CD8-positive, alpha-beta T cell (primary cell): ENCODE measurements at regions of chr9 and their contacts with region 1.

Region 1: DNA sequence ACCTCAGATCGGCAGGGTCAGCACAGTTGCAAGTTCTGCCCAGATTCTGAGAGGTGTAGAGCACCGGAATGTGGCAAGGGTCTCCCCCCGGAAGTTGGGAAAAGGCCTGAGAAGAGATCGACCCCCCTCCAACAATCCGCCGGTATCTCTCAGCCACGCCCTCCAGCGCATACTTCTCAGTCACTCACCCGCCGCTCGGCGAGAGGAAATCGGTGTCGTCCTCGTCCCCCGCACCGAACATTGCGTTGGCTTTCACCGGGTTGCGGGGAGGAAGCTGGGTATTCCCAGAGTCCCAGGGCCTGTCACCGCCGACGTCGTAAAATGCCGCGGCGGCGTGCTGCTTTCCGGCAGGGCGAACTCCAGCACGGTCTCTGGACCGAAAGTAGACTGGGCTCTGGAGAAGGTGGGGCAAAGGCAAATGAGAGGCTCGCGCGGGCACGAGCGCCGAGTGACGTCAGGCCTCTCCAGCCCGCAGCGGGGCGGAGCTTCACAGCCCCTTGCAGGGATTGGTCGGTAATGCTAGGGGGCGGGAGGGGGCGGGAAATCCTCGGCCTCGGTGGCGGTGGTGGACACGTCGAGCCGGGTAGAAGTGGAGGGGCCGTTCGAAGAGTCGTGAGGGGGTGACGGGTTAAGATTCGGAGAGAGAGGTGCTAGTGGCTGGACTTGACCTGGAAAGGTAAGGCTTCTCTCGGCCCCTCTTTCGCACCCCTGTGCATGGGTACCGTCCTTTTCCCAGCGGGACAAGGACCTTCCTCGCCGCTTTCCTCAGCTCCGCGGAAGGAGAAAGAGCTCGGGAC is at the starts of genes FKBP15 and SLC31A1:
- DNase-seq: peak; percentile 91 to 99 (median 95)
- ATAC-seq: peak; percentile 99
- H3K4me3 ChIP-seq: peak within 1 kb of the TSS; percentile 84 to 94
- H3K4me3 Mint-ChIP-seq: peak within 1 kb of the TSS; percentile 95
- H3K27ac ChIP-seq: peak within 1 kb of the TSS; percentile 71 to 90
- H3K27ac Mint-ChIP-seq: peak within 1 kb of the TSS; percentile 94
- H3K4me1 ChIP-seq: peaks cover 22% of the 10 kb centered on the region
- H3K4me1 Mint-ChIP-seq: peaks cover 57% of the 10 kb centered on the region
- H3K27me3 ChIP-seq: no peaks in the 10 kb centered on the region
- H3K27me3 Mint-ChIP-seq: no peaks in the 10 kb centered on the region
- CTCF ChIP-seq: no peak
- total RNA-seq, gene FKBP15: 8.7 to 8.9 TPM
- total RNA-seq, gene SLC31A1: 8.7 to 9.6 TPM

Region 2: DNA sequence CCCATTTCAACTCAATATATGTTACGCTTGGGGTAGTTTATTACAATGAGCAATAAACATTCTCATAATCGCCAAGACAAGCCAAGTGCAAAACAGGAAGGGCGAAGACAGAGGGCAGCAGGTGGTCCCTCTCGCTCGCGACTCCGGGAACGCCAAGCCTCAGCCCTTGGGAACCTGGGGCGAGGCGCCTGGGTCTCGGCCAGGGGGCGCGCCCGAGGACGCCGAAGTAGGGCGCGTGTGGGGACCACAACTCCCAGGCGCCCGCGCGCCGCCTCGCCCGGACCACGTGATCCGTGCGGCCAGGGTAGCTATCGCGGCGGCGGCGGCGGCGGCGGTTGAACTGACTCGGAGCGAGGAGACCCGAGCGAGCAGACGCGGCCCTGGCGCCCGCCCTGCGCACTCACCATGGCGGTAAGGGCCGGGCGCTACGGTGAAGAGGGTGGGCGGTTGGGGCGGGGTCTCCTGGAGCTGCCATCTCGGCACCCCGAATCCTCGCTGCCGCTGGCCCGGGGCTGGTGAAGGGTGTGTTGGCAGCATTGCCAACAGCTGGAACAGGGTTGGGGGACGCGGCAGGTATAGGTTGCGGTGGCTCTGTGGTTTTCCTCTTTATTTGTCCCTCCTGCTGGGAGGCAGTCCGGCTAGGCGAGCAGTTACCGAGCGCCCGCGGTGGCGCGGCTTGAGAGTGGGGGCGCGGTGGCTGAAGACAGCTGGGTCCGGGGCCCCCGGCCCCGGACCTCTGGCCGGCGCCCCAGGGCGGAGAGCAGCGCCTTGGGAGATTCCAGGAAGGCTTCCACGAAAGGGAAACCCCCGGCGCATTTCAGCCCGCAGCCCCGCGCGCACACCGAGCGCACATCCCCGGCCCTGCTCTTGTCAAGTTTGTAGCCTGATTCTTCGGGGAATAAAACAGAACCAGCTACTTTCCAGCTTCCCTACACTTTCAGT is 70.3 kb before region 1 on chr9 and contains the start of gene SLC31A2:
- CTCF ChIA-PET with region 1: no interaction called
- POLR2A ChIA-PET with region 1: interaction called, 4 read pairs
- intact Hi-C with region 1: loop called (anchors 1 kb)
- DNase-seq: peak; percentile 61 to 91 (median 85)
- ATAC-seq: peak; percentile 94
- H3K4me3 ChIP-seq: peak within 1 kb of the TSS; percentile 83 to 88
- H3K4me3 Mint-ChIP-seq: peak within 1 kb of the TSS; percentile 83
- H3K27ac ChIP-seq: peak within 1 kb of the TSS; percentile 38 to 52
- H3K27ac Mint-ChIP-seq: peak within 1 kb of the TSS; percentile 41
- H3K4me1 ChIP-seq: peaks cover 20% of the 10 kb centered on the region
- H3K4me1 Mint-ChIP-seq: peaks cover 35% of the 10 kb centered on the region
- H3K27me3 ChIP-seq: no peaks in the 10 kb centered on the region
- H3K27me3 Mint-ChIP-seq: no peaks in the 10 kb centered on the region
- CTCF ChIP-seq: peak; percentile 33
- total RNA-seq, gene SLC31A2: 5.4 to 6.0 TPM

Region 3: GRCh38 chr9:113196967-113197366 is 24.2 kb before region 1 on chr9:
- CTCF ChIA-PET with region 1: no interaction called
- POLR2A ChIA-PET with region 1: interaction called, 3 read pairs
- intact Hi-C with region 1: loop called in 1 of 2 experiments (anchors 2 kb)
- DNase-seq: no peak
- ATAC-seq: no peak
- H3K4me3 ChIP-seq: no peak overlapping the region
- H3K4me3 Mint-ChIP-seq: no peak overlapping the region
- H3K27ac ChIP-seq: no peak overlapping the region
- H3K27ac Mint-ChIP-seq: no peak overlapping the region
- H3K4me1 ChIP-seq: no peaks in the 10 kb centered on the region
- H3K4me1 Mint-ChIP-seq: no peaks in the 10 kb centered on the region
- H3K27me3 ChIP-seq: no peaks in the 10 kb centered on the region
- H3K27me3 Mint-ChIP-seq: no peaks in the 10 kb centered on the region
- CTCF ChIP-seq: no peak

Region 4: GRCh38 chr9:113247640-113248039 is 26.4 kb after region 1 on chr9:
- CTCF ChIA-PET with region 1: no interaction called
- POLR2A ChIA-PET with region 1: no interaction called
- intact Hi-C with region 1: no loop called
- DNase-seq: no peak
- ATAC-seq: no peak
- H3K4me3 ChIP-seq: no peak overlapping the region
- H3K4me3 Mint-ChIP-seq: no peak overlapping the region
- H3K27ac ChIP-seq: no peak overlapping the region
- H3K27ac Mint-ChIP-seq: no peak overlapping the region
- H3K4me1 ChIP-seq: no peaks in the 10 kb centered on the region
- H3K4me1 Mint-ChIP-seq: no peaks in the 10 kb centered on the region
- H3K27me3 ChIP-seq: no peaks in the 10 kb centered on the region
- H3K27me3 Mint-ChIP-seq: no peaks in the 10 kb centered on the region
- CTCF ChIP-seq: no peak

Region 5: DNA sequence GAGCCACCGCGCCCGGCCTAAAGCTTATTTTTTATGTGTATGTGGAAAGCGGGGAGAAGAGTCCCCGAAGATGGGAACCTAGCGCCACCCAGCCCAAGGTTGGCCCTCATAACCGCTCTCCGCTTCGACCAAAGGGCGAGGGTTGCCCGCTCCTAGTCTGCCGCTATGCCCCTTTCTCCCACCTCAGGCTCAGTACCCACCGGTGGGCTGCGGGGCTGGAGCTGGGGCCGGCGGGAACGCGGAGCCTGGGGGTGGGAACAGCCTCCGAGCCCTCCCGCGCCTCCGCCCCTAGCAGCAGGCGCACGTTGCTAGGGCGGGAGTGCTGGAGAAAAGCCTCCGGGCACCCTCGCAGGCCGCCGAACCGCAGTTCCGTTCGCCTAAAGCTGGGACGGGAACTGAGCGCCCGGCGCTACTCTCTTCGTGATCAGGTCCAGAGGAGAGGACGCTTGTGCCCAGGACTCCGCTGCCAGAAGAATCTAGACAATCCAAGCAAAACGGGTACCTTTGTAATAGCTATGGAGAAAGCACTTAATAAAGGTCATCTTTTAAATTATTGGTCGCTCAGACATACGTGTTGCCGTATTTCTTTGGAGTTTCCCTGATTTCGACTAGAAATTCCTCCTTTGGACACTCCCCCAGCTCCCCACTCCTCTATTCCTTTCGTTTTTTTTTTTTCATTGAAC is 119.0 kb after region 1 on chr9 and contains the start of gene WDR31:
- CTCF ChIA-PET with region 1: no interaction called
- POLR2A ChIA-PET with region 1: no interaction called
- intact Hi-C with region 1: loop called in 1 of 2 experiments (anchors 1 kb)
- DNase-seq: peak; percentile 58 to 90 (median 78)
- ATAC-seq: peak; percentile 99
- H3K4me3 ChIP-seq: peak within 1 kb of the TSS; percentile 70 to 83
- H3K4me3 Mint-ChIP-seq: peak within 1 kb of the TSS; percentile 83
- H3K27ac ChIP-seq: peak within 1 kb of the TSS in 1 of 2 experiments; percentile 46
- H3K27ac Mint-ChIP-seq: no peak within 1 kb of the TSS
- H3K4me1 ChIP-seq: peaks cover 19% of the 10 kb centered on the region
- H3K4me1 Mint-ChIP-seq: peaks cover 24% of the 10 kb centered on the region
- H3K27me3 ChIP-seq: peaks cover 0 to 3% of the 10 kb centered on the region in 2 experiments
- H3K27me3 Mint-ChIP-seq: peaks cover 2% of the 10 kb centered on the region
- CTCF ChIP-seq: no peak
- total RNA-seq, gene WDR31: 0.11 to 0.43 TPM

Region 6: GRCh38 chr9:113401027-113401792 is 180.0 kb after region 1 on chr9 and contains the start of gene ALAD:
- CTCF ChIA-PET with region 1: interaction called, 3 read pairs
- POLR2A ChIA-PET with region 1: no interaction called
- intact Hi-C with region 1: loop called (anchors 2 kb)
- DNase-seq: peak; percentile 98 to 100 (median 100)
- ATAC-seq: peak; percentile 99
- H3K4me3 ChIP-seq: peak within 1 kb of the TSS; percentile 80 to 81
- H3K4me3 Mint-ChIP-seq: peak within 1 kb of the TSS; percentile 97
- H3K27ac ChIP-seq: peak within 1 kb of the TSS; percentile 53
- H3K27ac Mint-ChIP-seq: peak within 1 kb of the TSS; percentile 92
- H3K4me1 ChIP-seq: peaks cover 16% of the 10 kb centered on the region
- H3K4me1 Mint-ChIP-seq: peaks cover 28% of the 10 kb centered on the region
- H3K27me3 ChIP-seq: no peaks in the 10 kb centered on the region
- H3K27me3 Mint-ChIP-seq: no peaks in the 10 kb centered on the region
- CTCF ChIP-seq: peak; percentile 94
- total RNA-seq, gene ALAD: 11.2 to 11.5 TPM

Region 7: DNA sequence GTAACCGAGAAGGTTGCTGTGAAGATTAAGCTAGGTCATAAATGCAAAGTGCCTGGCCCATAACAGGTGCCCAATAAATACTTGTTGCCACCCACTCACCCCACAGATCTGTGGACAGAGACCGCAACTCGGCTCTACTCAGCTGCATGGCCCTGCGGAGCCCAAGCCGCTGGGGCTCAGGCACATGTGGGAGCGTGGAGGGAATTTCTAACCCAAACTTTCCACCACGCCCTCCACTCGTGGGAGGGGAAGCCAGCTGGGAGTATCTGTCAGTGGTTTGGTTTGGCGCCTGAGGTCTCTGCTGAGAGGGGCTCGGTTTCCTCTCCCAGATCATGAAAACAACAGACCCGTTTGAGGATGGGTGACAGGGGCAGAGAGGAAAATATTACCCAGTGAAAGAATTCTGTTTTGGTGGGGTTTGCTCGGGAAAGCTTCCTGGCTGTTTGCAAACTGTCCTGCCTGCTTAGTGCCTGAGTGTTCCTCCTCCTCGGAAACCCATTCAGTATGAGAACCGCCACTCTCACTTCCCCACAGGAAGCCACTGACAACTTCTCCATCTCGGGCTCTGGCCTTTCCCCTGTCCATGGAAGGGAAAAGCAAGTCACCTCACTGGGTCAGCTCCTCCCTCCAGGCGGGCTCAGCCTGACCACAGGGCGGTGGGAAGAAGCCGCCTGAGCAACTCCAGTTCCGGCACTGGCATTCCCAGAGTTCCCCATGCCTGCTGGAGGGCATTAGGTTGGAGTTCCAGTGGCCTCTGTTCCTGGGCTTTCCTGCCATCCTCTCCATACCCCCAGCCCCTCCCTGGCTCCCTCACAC is 302.4 kb after region 1 on chr9:
- CTCF ChIA-PET with region 1: no interaction called
- POLR2A ChIA-PET with region 1: no interaction called
- intact Hi-C with region 1: loop called in 1 of 2 experiments (anchors 5 kb)
- DNase-seq: peak in 8 of 9 experiments; percentile 46 to 87 (median 66)
- ATAC-seq: peak; percentile 27
- H3K4me3 ChIP-seq: peak overlapping the region; percentile 31 to 40
- H3K4me3 Mint-ChIP-seq: peak overlapping the region; percentile 80
- H3K27ac ChIP-seq: peak overlapping the region; percentile 19 to 78
- H3K27ac Mint-ChIP-seq: peak overlapping the region; percentile 94
- H3K4me1 ChIP-seq: peaks cover 97% of the 10 kb centered on the region
- H3K4me1 Mint-ChIP-seq: peaks cover 92% of the 10 kb centered on the region
- H3K27me3 ChIP-seq: no peaks in the 10 kb centered on the region
- H3K27me3 Mint-ChIP-seq: no peaks in the 10 kb centered on the region
- CTCF ChIP-seq: no peak

Region 8: DNA sequence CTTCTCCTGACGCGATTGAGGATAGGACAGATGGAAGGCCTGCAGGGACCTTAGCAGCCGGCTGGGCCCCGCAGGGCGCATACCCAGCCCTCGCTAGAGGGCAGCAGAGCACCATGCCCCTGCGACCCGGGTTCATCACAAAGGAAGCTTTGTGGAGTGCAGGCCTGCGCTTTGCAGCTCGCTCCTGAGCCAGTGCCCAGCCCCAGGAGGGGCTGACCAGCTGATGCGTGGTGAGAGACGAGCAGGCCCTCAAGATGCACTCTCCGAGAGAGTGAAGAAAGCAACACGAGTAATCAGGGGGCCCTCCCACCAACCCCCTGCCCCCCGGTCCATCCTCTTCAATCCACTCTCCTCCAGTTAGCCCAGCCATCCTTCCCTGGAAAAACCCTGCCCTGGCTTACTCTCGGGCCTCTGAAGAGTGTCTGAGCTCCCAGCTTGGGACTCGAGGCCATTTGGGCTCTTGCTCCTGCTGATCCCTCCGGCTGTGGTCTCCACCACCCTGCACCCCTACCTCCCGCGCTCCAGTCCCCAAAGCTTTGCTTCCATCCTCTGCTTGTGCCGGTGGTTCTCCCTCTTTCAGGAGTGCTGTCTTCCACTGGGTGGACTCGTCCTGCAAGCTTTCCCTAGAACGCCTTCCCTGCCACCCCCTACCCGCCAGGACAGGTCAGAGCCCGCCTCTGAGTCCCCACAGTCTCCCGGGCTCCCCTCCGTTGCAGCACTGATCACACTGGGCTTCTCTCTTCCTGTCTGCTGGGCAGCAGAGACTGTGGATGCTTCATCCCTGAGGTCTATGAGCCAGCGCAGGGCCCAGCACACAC is 887.0 kb after region 1 on chr9:
- CTCF ChIA-PET with region 1: no interaction called
- POLR2A ChIA-PET with region 1: no interaction called
- intact Hi-C with region 1: no loop called
- DNase-seq: peak in 8 of 9 experiments; percentile 8 to 62 (median 40)
- ATAC-seq: peak; percentile 48
- H3K4me3 ChIP-seq: no peak overlapping the region
- H3K4me3 Mint-ChIP-seq: no peak overlapping the region
- H3K27ac ChIP-seq: no peak overlapping the region
- H3K27ac Mint-ChIP-seq: no peak overlapping the region
- H3K4me1 ChIP-seq: no peaks in the 10 kb centered on the region
- H3K4me1 Mint-ChIP-seq: no peaks in the 10 kb centered on the region
- H3K27me3 ChIP-seq: peaks cover 0 to under 1% of the 10 kb centered on the region in 2 experiments
- H3K27me3 Mint-ChIP-seq: peaks cover 10% of the 10 kb centered on the region
- CTCF ChIP-seq: peak; percentile 58